ENCODE measurements at regions of chr7 and their contacts with region 1.

Region 1: GRCh38 chr7:105759670-105760550 is 116.5 kb downstream of the ATXN7L1 start:
- DNase-seq: no peak

Region 2: GRCh38 chr7:105652359-105652993 is 107.4 kb before region 1 on chr7:
- intact Hi-C with region 1: loop called in 1 of 2 experiments (anchors 1 kb)
- DNase-seq: peak; percentile 93

Region 3: DNA sequence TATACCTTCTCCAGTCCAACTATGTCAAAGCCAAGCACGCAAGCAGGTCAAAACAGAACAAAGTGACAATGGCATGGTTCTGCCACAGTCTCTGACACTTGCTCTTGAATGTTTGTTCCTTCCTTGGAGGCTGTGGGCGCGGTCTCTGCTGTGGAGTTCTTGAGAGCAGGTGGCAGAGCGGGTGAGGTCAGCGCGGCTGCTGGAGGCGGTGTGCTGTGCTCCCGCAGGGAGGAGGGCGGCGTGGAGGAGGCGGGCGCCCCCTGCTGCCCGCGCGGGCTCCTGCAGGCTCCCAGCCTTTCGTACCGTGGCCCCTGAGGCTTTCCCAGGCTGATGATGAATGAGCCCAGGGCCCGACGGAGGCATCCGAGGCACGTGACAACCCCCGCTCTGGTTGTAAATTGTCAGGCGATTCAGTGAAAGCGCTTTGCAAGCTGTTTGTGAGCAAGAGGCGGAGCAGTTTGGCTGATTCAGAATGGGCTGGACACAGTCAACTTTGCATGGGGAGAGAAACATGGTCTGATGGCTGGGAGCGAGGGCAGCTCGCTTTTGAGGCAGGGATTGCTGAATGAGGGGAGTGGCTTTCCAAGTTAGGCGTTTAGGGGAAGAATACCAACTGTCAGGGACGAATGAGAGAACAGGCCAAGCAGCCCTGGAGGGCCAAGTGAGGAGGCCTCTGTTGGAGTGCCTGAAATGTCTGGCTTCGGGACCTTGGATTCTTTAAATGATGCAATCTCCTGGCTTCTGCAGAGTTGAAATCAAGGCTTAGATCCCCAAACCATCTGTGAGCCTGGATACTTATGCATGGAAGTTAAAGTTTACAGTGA is 249.7 kb after region 1 on chr7:
- intact Hi-C with region 1: loop called in 1 of 2 experiments (anchors 10 kb)
- DNase-seq: peak; percentile 95

Region 4: GRCh38 chr7:106041140-106041717 is 281.3 kb after region 1 on chr7:
- intact Hi-C with region 1: loop called (anchors 2 to 5 kb)
- DNase-seq: no peak

Region 5: GRCh38 chr7:106047818-106048705 is 288.2 kb after region 1 on chr7:
- intact Hi-C with region 1: loop called (anchors 2 to 5 kb)
- DNase-seq: peak; percentile 30

Region 6: DNA sequence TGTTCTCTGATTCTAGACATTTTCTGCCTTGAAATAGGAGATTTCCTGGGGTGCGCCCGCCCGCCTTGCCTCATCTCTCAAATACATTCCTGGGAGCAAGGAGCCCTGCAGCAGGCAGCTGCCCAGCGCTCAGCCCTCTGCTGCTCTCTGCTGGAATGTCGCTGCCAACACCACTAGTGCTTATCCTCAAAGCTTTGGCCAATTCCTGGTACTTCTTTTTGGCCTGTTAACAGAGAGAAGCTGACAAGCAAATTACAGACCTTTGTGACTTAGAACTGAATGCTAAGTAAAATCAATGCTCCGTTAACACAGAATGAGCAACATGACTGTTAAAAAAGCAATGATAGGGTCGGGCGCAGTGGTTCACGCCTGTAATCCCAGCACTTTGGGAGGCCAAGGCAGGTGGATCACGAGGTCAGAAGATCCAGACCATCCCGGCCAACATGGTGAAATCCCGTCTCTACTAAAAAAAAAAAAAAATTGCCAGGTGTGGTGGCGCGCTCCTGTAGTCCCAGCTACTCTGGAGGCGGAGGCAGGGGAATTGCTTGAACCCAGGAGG is 394.1 kb after region 1 on chr7:
- intact Hi-C with region 1: loop called in 1 of 2 experiments (anchors 10 kb)
- DNase-seq: peak; percentile 94

Region 7: GRCh38 chr7:106196460-106197021 is 436.6 kb after region 1 on chr7:
- intact Hi-C with region 1: no loop called
- DNase-seq: no peak